AG04450 (cell line): ENCODE measurements at regions of chr2 and their contacts with region 1.

Region 1: GRCh38 chr2:196076778-196077568 is 8.3 kb upstream of the DNAH7 start:
- DNase-seq: no peak
- H3K4me3 ChIP-seq: no peak overlapping the region
- H3K27ac ChIP-seq: no peak overlapping the region
- H3K27me3 ChIP-seq: no peaks in the 10 kb centered on the region
- CTCF ChIP-seq: no peak

Region 2: DNA sequence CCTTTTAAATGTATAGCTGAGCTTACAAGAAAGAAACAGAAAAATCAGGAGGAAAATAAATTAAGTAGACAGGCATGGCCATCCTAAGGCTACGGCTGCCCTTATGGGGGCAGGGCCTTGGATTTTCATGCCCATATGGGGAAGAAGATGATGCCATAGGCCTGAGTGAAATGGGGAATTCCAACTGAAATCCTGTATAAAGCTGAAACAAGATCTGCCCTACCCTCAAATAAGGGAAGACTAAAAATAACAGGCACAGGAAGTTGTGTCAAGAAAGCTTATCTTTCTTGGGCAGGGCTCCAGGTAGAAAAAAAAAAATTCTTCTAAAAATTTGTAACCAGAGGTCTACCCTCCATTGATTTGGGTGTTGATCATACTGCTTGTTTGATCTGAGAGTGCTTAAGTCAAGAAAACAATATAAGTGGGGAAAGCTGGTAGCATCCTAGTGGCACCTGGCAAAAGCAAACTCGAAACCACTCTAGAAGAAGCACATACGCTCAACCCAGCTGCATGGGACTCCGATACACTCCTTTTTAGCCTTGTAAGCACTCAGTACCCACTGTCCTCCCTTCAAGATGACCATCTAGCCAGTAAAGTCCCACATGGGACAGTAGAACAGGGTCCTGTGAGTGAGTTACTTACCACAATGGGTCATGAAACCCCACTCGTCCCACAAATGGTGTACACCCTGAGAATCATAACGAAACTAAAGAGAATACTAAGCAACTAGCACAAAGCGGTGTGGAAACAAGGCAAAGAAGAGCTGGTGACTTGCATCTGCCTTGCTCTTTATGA is 30.7 kb before region 1 on chr2:
- CTCF ChIA-PET with region 1: no interaction called
- POLR2A ChIA-PET with region 1: no interaction called
- DNase-seq: peak; percentile 20
- H3K4me3 ChIP-seq: no peak overlapping the region
- H3K27ac ChIP-seq: no peak overlapping the region
- H3K27me3 ChIP-seq: no peaks in the 10 kb centered on the region
- CTCF ChIP-seq: no peak

Region 3: DNA sequence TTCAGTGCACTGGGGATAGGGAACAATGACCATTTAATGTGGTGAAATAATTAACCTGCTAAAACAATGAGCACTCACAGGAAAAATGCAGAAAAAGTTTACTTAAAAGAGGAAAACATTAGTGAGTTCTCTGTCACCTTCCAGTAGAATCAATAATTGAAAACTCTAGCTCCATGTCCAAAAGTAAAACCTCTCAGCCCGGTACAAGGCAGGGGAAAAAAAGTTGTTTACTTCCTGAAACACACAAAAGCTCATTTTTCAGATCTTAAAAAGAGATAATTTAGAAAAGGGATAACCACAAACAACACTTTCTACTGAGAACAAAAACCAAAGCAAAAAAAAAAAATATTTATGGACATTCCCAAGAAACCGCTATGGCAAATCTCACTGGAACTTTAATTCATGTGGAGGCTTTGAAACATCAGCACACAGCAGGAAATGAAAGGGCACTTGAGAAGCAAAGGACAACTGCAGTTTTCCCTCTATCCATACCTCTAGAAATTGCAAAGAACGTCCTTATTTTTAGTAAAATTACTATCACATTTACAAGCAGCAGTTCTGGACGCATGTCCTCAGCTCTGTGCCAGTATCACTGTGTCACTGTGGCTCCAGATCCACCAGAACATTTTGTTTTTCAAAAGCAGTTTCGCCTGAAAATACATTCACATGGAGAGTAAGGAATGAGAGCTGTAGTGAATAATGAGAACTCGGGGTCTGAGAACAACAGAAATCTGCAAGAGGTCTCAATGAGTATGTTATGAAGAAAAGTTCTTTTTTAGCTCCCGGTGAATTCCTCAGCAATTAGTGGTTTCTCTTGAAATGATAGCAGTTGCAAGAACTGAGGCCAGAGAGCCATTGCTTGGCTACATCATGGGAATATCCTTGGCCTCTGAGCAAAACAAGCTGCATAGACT is 36.3 kb after region 1 on chr2:
- CTCF ChIA-PET with region 1: interaction called, 4 read pairs
- POLR2A ChIA-PET with region 1: interaction called, 12 read pairs
- DNase-seq: peak; percentile 50
- H3K4me3 ChIP-seq: no peak overlapping the region
- H3K27ac ChIP-seq: peak overlapping the region; percentile 76
- H3K27me3 ChIP-seq: no peaks in the 10 kb centered on the region
- CTCF ChIP-seq: no peak

Region 4: DNA sequence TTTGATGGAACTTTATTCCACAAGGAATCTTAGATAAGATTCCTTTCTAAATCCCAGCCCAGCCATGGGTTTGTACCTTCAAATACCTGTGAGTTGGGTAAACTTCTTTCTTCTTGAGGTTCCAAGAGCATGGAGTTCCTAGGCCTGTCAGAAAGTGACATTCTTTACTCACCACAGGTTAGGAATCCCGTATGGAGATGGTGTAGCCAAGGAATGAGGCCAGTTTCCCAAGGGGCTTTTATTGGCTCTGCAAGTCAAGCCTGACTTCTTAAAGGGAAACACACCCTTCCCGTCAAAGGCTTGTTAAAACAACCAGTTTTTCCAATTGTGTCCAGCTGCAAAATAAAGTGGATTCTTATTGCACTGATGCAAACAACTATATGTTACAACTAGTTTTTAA is 48.6 kb after region 1 on chr2:
- CTCF ChIA-PET with region 1: no interaction called
- POLR2A ChIA-PET with region 1: no interaction called
- DNase-seq: no peak
- H3K4me3 ChIP-seq: no peak overlapping the region
- H3K27ac ChIP-seq: no peak overlapping the region
- H3K27me3 ChIP-seq: no peaks in the 10 kb centered on the region
- CTCF ChIP-seq: no peak

Region 5: DNA sequence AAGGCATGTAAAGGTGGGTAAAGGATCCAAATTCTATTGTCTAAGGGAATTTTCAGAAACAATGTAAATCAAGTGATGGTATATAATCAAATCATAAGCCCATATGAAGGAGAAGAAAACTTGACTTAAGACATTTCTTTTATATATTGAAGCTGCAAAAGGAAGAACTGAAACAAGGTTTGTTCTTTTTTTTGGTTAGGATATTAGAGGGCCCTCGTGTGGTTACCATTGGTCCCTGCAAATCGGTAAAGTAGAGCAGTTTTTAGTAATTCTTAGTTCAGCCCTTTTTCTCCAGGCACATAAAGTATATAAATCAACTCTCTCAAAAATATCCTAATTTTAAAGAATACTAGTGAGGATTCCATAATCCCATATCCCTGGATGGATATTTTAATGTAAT is 200.0 kb after region 1 on chr2:
- CTCF ChIA-PET with region 1: interaction called, 28 read pairs
- POLR2A ChIA-PET with region 1: interaction called, 4 read pairs
- DNase-seq: no peak
- H3K4me3 ChIP-seq: no peak overlapping the region
- H3K27ac ChIP-seq: no peak overlapping the region
- H3K27me3 ChIP-seq: no peaks in the 10 kb centered on the region
- CTCF ChIP-seq: peak; percentile 67

Region 6: GRCh38 chr2:196291873-196292800 is 215.2 kb after region 1 on chr2:
- CTCF ChIA-PET with region 1: interaction called, 10 read pairs
- POLR2A ChIA-PET with region 1: no interaction called
- DNase-seq: no peak
- H3K4me3 ChIP-seq: no peak overlapping the region
- H3K27ac ChIP-seq: no peak overlapping the region
- H3K27me3 ChIP-seq: no peaks in the 10 kb centered on the region
- CTCF ChIP-seq: no peak